MCF 10A (cell line): ENCODE measurements at regions of chr16 and their contacts with region 1.

Region 1: DNA sequence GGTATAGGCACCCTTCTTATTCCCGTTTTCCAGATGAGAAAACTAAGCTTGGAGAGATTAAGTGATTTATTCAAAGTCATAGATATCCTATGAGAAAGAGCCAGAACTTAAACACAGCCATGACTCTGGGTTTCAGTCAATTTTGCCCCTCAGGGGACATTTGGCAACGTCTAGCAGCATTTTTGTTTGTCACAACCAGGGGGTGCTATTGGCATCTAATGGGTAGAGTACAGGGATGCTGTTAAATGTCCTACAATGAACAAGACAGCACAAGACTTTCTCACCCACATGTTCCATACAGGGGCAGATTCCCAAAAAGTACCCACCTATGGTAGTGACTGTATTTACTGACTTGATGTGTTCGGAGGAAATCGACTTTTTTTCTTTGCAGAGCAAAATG is 4.8 kb upstream of the SHISA9 start:
- DNase-seq: peak; percentile 77
- H3K4me3 Mint-ChIP-seq: no peak overlapping the region
- H3K27ac Mint-ChIP-seq: no peak overlapping the region
- H3K4me1 Mint-ChIP-seq: no peaks in the 10 kb centered on the region
- H3K27me3 Mint-ChIP-seq: peaks cover 11% of the 10 kb centered on the region
- CTCF ChIP-seq: peak; percentile 63

Region 2: GRCh38 chr16:12455287-12455798 is 441.2 kb before region 1 on chr16:
- CTCF ChIA-PET with region 1: interaction called, 4 read pairs
- POLR2A ChIA-PET with region 1: no interaction called
- intact Hi-C with region 1: loop called (anchors 5 kb)
- DNase-seq: peak; percentile 56
- H3K4me3 Mint-ChIP-seq: no peak overlapping the region
- H3K27ac Mint-ChIP-seq: no peak overlapping the region
- H3K4me1 Mint-ChIP-seq: no peaks in the 10 kb centered on the region
- H3K27me3 Mint-ChIP-seq: no peaks in the 10 kb centered on the region
- CTCF ChIP-seq: peak; percentile 95

Region 3: DNA sequence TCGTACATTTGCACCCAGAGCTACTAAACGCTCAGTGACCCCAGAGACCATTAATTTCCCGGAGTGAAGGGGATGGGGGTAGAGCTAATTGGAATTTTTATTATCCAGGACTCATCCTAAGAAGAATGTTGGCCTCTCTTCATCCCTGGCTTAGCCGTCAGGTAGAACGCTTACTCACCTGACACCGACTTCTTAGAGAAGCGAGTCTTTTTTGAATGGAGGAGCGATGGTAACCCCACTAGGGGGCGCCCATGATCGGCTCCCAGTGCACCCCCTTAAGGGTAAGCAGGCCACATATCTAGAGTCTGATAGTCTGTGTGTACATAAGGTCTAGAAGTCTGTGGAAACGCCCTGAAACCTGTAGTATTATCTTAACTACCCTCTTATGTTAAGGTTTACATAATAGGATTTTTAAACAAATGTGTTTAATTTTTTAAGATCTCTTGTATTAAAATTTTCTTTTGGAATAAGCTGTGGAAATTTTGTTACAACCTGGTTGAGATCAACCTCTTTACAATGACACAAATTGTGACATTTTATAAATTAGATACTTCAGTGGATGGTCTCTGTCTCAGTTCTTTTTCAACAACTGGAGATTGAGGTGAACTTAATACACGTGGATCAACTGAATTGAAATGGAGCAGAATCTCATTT is 322.7 kb before region 1 on chr16:
- CTCF ChIA-PET with region 1: no interaction called
- POLR2A ChIA-PET with region 1: no interaction called
- intact Hi-C with region 1: loop called (anchors 1 kb)
- DNase-seq: peak; percentile 62
- H3K4me3 Mint-ChIP-seq: no peak overlapping the region
- H3K27ac Mint-ChIP-seq: no peak overlapping the region
- H3K4me1 Mint-ChIP-seq: no peaks in the 10 kb centered on the region
- H3K27me3 Mint-ChIP-seq: no peaks in the 10 kb centered on the region
- CTCF ChIP-seq: peak; percentile 64

Region 4: DNA sequence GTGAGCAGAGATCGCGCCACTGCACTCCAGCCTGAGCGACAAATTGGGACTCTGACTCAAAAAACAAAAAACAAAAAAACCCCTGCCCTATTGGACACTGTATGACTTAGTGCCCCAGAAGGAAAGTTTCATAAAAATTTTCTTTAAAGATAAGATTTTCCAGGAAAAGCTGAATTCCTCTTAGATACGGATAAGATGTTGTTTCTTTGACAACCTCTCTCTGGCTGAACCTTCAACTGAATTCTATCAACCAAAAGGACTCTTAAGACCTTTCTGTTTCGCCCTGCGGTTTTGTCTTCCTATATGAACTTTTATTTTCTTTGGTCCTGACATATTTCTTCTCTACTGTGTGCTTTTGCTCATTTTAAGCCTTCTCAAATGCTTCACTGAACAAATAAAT is 128.7 kb before region 1 on chr16:
- CTCF ChIA-PET with region 1: no interaction called
- POLR2A ChIA-PET with region 1: no interaction called
- intact Hi-C with region 1: no loop called
- DNase-seq: no peak
- H3K4me3 Mint-ChIP-seq: no peak overlapping the region
- H3K27ac Mint-ChIP-seq: no peak overlapping the region
- H3K4me1 Mint-ChIP-seq: no peaks in the 10 kb centered on the region
- H3K27me3 Mint-ChIP-seq: no peaks in the 10 kb centered on the region
- CTCF ChIP-seq: no peak

Region 5: GRCh38 chr16:13223666-13224065 is 327.1 kb after region 1 on chr16:
- CTCF ChIA-PET with region 1: no interaction called
- POLR2A ChIA-PET with region 1: no interaction called
- intact Hi-C with region 1: loop called (anchors 5 kb)
- DNase-seq: no peak
- H3K4me3 Mint-ChIP-seq: no peak overlapping the region
- H3K27ac Mint-ChIP-seq: no peak overlapping the region
- H3K4me1 Mint-ChIP-seq: no peaks in the 10 kb centered on the region
- H3K27me3 Mint-ChIP-seq: no peaks in the 10 kb centered on the region
- CTCF ChIP-seq: no peak

Region 6: DNA sequence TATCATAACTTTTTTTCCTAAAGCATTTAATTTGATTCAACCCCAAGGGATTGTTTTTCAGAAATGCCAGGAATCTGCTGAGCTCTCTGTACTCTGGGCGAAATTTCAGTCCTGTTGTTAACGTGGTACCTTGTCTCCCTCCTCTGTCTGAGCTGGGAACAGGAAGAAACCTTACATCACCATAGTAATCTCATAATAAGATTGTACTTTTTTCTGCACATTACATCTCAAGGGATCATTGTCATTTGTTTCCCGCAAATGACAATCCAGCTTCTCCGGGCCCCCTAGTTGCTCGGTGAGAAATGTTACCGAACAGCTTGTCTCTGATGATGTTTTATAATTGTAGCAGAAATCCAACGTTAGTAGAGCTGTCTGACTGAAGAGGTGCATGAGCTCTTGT is 870.7 kb after region 1 on chr16:
- CTCF ChIA-PET with region 1: interaction called, 5 read pairs
- POLR2A ChIA-PET with region 1: no interaction called
- intact Hi-C with region 1: loop called (anchors 2 kb)
- DNase-seq: peak; percentile 24
- H3K4me3 Mint-ChIP-seq: no peak overlapping the region
- H3K27ac Mint-ChIP-seq: no peak overlapping the region
- H3K4me1 Mint-ChIP-seq: no peaks in the 10 kb centered on the region
- H3K27me3 Mint-ChIP-seq: peaks cover 38% of the 10 kb centered on the region
- CTCF ChIP-seq: no peak

Region 7: GRCh38 chr16:13873835-13874438 is 977.4 kb after region 1 on chr16:
- CTCF ChIA-PET with region 1: interaction called, 5 read pairs
- POLR2A ChIA-PET with region 1: no interaction called
- intact Hi-C with region 1: loop called (anchors 1 kb)
- DNase-seq: peak; percentile 30
- H3K4me3 Mint-ChIP-seq: no peak overlapping the region
- H3K27ac Mint-ChIP-seq: no peak overlapping the region
- H3K4me1 Mint-ChIP-seq: no peaks in the 10 kb centered on the region
- H3K27me3 Mint-ChIP-seq: peaks cover 21% of the 10 kb centered on the region
- CTCF ChIP-seq: peak; percentile 41